ENCODE measurements at regions of chr12 and their contacts with region 1.

Region 1: GRCh38 chr12:24991209-24992049 is 42.5 kb upstream of the BCAT1 start:
- DNase-seq: no peak
- H3K4me3 Mint-ChIP-seq: no peak overlapping the region
- H3K27ac Mint-ChIP-seq: no peak overlapping the region
- H3K4me1 Mint-ChIP-seq: peaks cover 3% of the 10 kb centered on the region
- H3K27me3 Mint-ChIP-seq: no peaks in the 10 kb centered on the region

Region 2: GRCh38 chr12:24922090-24922489 is 69.3 kb before region 1 on chr12:
- CTCF ChIA-PET with region 1: no interaction called
- POLR2A ChIA-PET with region 1: no interaction called
- DNase-seq: no peak
- H3K4me3 Mint-ChIP-seq: no peak overlapping the region
- H3K27ac Mint-ChIP-seq: no peak overlapping the region
- H3K4me1 Mint-ChIP-seq: peaks cover 16% of the 10 kb centered on the region
- H3K27me3 Mint-ChIP-seq: peaks cover 6% of the 10 kb centered on the region

Region 3: GRCh38 chr12:24948757-24949722 is 42.4 kb before region 1 on chr12 and contains the start of gene BCAT1:
- CTCF ChIA-PET with region 1: no interaction called
- POLR2A ChIA-PET with region 1: no interaction called
- DNase-seq: peak; percentile 52
- H3K4me3 Mint-ChIP-seq: peak within 1 kb of the TSS; percentile 76
- H3K27ac Mint-ChIP-seq: peak within 1 kb of the TSS; percentile 19
- H3K4me1 Mint-ChIP-seq: peaks cover 30% of the 10 kb centered on the region
- H3K27me3 Mint-ChIP-seq: peaks cover 53% of the 10 kb centered on the region
- total RNA-seq, gene BCAT1: 22.8 to 24.8 TPM

Region 4: GRCh38 chr12:25130741-25131188 is 139.3 kb after region 1 on chr12:
- CTCF ChIA-PET with region 1: interaction called, 41 read pairs
- POLR2A ChIA-PET with region 1: no interaction called
- DNase-seq: no peak
- H3K4me3 Mint-ChIP-seq: no peak overlapping the region
- H3K27ac Mint-ChIP-seq: no peak overlapping the region
- H3K4me1 Mint-ChIP-seq: no peaks in the 10 kb centered on the region
- H3K27me3 Mint-ChIP-seq: peaks cover 4% of the 10 kb centered on the region

Region 5: DNA sequence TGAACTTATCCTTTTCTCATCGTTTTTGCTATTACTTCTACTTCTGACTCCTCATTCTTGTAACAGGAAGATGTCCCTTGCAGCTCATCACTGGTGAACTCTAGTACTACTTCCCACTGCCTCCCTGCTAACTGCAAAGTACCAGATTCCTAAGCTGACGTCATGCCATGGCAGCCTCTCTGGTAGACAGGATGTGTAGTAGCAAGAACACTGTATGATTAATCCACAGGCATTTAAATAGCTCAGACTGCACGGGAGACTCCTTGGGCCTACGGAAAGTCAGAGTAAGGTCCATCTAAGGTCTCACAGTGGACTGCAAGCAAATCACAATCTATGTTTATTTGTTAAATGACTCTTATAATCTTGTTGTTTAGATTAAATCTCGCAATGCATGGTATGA is 160.0 kb after region 1 on chr12:
- CTCF ChIA-PET with region 1: interaction called, 16 read pairs
- POLR2A ChIA-PET with region 1: no interaction called
- DNase-seq: no peak
- H3K4me3 Mint-ChIP-seq: no peak overlapping the region
- H3K27ac Mint-ChIP-seq: no peak overlapping the region
- H3K4me1 Mint-ChIP-seq: peaks cover 9% of the 10 kb centered on the region
- H3K27me3 Mint-ChIP-seq: peaks cover 1% of the 10 kb centered on the region

Measured in activated CD4-positive, alpha-beta memory T cell treated with anti-CD3 and anti-CD28 coated beads, Interleukin-2, amount 10 ng/mL, durations not matched to agents 7 days and 5 days (primary cell).